Natural killer cell (primary cell): ENCODE measurements at regions of chr5 and their contacts with region 1.

Region 1: DNA sequence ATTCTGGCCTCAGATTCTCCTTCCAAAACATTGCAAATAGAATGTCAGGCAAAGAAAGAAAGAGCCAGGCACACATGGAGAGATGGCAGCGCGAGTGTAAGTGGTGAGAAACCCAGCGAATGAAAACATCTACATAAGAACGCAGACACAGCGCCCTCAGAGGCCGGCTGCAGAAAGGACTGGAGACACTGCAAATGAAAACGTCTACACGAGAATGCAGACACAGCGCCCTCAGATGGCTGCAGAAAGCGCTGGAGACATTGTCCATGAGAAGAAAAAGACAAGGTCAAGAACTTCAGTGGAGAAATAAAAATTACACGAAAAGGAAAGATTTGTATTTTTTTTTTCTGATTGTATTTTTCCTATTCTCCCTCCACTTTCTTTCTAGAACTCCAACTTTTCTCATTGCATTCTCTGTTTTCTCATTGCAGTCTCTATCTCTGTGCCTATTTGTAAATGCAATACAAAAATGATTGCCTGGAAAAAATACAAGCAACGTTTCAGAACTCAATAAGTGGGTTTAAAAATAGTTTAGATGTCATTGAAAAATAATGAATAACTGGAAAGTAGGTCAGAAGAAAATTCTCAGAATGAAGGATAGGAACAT is 117.9 kb upstream of the LPCAT1 start:
- DNase-seq: peak in 1 of 2 donors; percentile 87
- ATAC-seq: peak; percentile 73 to 96 (median 92)
- H3K4me3 ChIP-seq: no peak overlapping the region
- H3K4me3 Mint-ChIP-seq: no peak overlapping the region
- H3K27ac ChIP-seq: no peak overlapping the region
- H3K27ac Mint-ChIP-seq: no peak overlapping the region
- H3K4me1 ChIP-seq: peaks cover 14% of the 10 kb centered on the region
- H3K4me1 Mint-ChIP-seq: peaks cover 10% of the 10 kb centered on the region in 2 donors
- H3K27me3 ChIP-seq: peaks cover 26% of the 10 kb centered on the region
- H3K27me3 Mint-ChIP-seq: peaks cover 21 to 23% of the 10 kb centered on the region in 2 donors
- CTCF ChIP-seq: peak; percentile 63

Region 2: DNA sequence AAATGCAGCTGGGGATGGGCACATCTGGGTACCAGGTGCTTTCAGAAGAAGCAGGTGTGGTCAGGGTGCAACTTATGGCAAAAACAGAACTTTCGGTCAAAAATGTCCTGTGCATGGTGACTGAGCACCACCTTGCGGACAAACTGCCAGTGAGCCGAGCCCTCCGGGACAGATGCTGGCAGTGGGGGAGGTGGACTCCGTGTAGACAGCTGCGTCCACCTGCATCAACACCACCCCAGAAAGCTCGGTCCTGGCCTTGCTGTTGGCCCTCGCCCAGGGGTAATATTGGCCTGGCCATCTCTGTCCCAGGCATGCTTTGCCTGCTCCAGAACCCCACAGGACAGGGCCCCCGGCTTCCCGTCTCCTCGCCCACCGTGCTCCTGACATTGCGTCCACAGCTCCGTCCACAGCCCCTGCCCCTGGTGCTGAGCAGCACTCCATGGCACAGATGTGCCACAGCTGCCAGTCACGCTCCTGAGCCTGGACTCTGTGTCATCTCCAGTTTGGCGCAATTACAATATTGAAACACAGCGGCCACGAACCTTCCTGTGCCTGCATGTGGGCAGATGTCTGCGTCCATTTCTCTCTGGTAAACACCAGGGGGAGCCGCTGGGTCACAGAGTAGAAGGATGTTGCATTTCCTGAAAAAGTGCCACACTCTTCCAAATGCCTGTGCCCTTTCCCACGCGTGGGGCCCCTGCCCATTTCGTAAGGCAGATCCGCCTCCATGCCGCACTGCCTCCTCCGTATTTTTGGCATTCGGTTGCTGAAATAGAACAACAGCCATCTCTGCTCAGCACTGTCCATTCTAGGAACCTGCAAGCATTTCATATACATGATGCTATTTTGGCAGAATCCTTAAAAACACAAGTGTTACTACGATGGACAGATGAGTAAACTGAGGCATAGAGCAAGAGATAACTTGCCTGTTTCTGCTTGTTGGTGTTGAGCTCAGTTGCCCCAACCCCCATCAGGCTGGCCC is 473.6 kb before region 1 on chr5:
- intact Hi-C with region 1: loop called (anchors 1 kb)
- DNase-seq: peak; percentile 59 to 85
- ATAC-seq: peak; percentile 73 to 89 (median 86)
- H3K4me3 ChIP-seq: peak overlapping the region; percentile 6
- H3K4me3 Mint-ChIP-seq: peak overlapping the region; percentile 86
- H3K27ac ChIP-seq: no peak overlapping the region
- H3K27ac Mint-ChIP-seq: peak overlapping the region in 1 of 2 donors; percentile 54
- H3K4me1 ChIP-seq: peaks cover 22% of the 10 kb centered on the region
- H3K4me1 Mint-ChIP-seq: peaks cover 13 to 14% of the 10 kb centered on the region in 2 donors
- H3K27me3 ChIP-seq: no peaks in the 10 kb centered on the region
- H3K27me3 Mint-ChIP-seq: peaks cover 6 to 19% of the 10 kb centered on the region in 2 donors
- CTCF ChIP-seq: peak; percentile 91

Region 3: GRCh38 chr5:1380011-1380817 is 261.4 kb before region 1 on chr5:
- intact Hi-C with region 1: loop called (anchors 1 kb)
- DNase-seq: peak; percentile 65 to 75
- ATAC-seq: peak; percentile 87 to 92 (median 88)
- H3K4me3 ChIP-seq: no peak overlapping the region
- H3K4me3 Mint-ChIP-seq: peak overlapping the region; percentile 80
- H3K27ac ChIP-seq: no peak overlapping the region
- H3K27ac Mint-ChIP-seq: peak overlapping the region in 1 of 2 donors; percentile 64
- H3K4me1 ChIP-seq: peaks cover 23% of the 10 kb centered on the region
- H3K4me1 Mint-ChIP-seq: peaks cover 21 to 28% of the 10 kb centered on the region in 2 donors
- H3K27me3 ChIP-seq: no peaks in the 10 kb centered on the region
- H3K27me3 Mint-ChIP-seq: no peaks in the 10 kb centered on the region
- CTCF ChIP-seq: peak; percentile 94

Region 4: GRCh38 chr5:1479581-1480188 is 162.0 kb before region 1 on chr5:
- intact Hi-C with region 1: loop called (anchors 1 kb)
- DNase-seq: peak; percentile 46 to 78
- ATAC-seq: peak; percentile 61 to 72 (median 72)
- H3K4me3 ChIP-seq: no peak overlapping the region
- H3K4me3 Mint-ChIP-seq: no peak overlapping the region
- H3K27ac ChIP-seq: peak overlapping the region; percentile 65
- H3K27ac Mint-ChIP-seq: peak overlapping the region; percentile 78 to 90
- H3K4me1 ChIP-seq: peaks cover 46% of the 10 kb centered on the region
- H3K4me1 Mint-ChIP-seq: peaks cover 19 to 22% of the 10 kb centered on the region in 2 donors
- H3K27me3 ChIP-seq: no peaks in the 10 kb centered on the region
- H3K27me3 Mint-ChIP-seq: no peaks in the 10 kb centered on the region
- CTCF ChIP-seq: peak; percentile 74

Region 5: GRCh38 chr5:1494780-1495524 is 146.7 kb before region 1 on chr5:
- intact Hi-C with region 1: loop called (anchors 5 kb)
- DNase-seq: peak; percentile 74 to 79
- ATAC-seq: peak; percentile 80 to 84 (median 83)
- H3K4me3 ChIP-seq: peak overlapping the region; percentile 11
- H3K4me3 Mint-ChIP-seq: peak overlapping the region; percentile 82
- H3K27ac ChIP-seq: peak overlapping the region; percentile 92
- H3K27ac Mint-ChIP-seq: peak overlapping the region; percentile 96 to 97
- H3K4me1 ChIP-seq: peaks cover 89% of the 10 kb centered on the region
- H3K4me1 Mint-ChIP-seq: peaks cover 82 to 87% of the 10 kb centered on the region in 2 donors
- H3K27me3 ChIP-seq: no peaks in the 10 kb centered on the region
- H3K27me3 Mint-ChIP-seq: no peaks in the 10 kb centered on the region
- CTCF ChIP-seq: peak; percentile 22